Posterior vena cava (tissue), 2 donors: ENCODE measurements at regions of chr16 and their contacts with region 1.

Region 1: DNA sequence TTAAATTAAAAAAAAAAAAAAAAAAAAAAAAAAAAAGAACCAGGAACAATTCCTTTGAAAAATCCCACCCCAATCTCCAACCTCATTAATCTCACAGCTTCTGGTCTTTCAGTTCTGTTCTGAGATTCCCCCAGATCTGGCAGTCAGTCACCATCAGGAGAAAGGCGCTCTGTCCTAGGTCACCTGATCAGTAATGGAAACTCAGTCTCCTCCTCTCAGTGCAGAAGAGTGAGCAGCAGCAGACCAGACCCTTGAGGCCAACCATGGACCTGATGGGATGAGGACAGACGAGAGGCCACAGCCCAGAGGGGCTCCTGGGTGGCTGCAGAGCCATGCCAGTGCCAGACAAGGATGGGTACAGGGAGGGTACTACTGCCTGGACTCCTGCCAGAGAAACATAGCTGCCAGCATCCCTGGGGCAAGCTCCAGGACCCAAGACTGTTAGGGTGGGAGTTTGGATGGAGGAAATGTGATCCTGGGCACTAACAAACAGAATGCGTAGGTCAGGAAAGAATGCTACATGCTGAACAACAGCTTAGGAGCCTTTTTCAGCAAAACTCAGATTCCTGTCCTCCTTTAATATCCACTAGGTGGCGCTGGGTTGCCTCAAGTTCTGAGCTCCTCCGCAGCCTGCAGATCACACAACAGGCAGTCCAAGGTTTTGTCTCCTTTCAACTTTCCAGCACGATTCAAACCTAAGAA is 28.7 kb downstream of the MPG start:
- DNase-seq: no peak

Region 2: DNA sequence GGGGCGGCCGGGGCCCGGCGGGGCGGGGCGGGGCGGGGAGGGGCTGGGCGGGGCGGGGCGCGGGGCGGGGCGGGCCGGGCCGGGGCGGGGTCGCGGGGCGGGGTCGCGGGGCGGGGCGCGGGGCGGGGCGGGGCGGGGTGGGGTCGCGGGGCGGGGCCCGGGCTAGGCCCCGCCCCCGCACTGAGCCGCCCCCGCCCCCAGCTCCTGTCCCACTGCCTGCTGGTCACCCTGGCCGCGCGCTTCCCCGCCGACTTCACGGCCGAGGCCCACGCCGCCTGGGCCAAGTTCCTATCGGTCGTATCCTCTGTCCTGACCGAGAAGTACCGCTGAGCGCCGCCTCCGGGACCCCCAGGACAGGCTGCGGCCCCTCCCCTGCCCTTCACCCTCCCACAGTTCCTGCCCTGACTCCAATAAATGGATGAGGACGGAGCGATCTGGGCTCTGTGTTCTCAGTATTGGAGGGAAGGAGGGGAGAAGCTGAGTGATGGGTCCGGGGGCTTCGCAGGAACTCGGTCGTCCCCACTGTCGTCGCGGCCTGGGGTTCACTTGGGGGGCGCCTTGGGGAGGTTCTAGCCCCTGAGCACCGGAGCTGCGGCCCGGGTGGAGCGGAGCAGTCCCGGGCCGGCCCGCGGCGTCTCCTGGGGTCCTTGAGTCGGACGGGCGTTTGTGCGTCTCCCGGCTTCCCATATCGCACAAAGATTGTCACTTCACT is 58.2 kb after region 1 on chr16:
- intact Hi-C with region 1: no loop called
- DNase-seq: no peak

Region 3: GRCh38 chr16:180938-181667 is 74.3 kb after region 1 on chr16:
- intact Hi-C with region 1: loop called in 1 of 2 experiments (anchors 5 kb)
- DNase-seq: peak; percentile 94

Region 4: GRCh38 chr16:1105888-1106620 is 999.3 kb after region 1 on chr16:
- intact Hi-C with region 1: no loop called
- DNase-seq: no peak